T-cell (primary cell): ENCODE measurements at regions of chr2 and their contacts with region 1.

Region 1: GRCh38 chr2:14560366-14561115 is 72.0 kb upstream of the LRATD1 start:
- DNase-seq: no peak
- ATAC-seq: no peak
- H3K4me3 ChIP-seq: no peak overlapping the region
- H3K4me3 Mint-ChIP-seq: no peak overlapping the region
- H3K27ac ChIP-seq: no peak overlapping the region
- H3K27ac Mint-ChIP-seq: no peak overlapping the region
- H3K4me1 ChIP-seq: no peaks in the 10 kb centered on the region
- H3K4me1 Mint-ChIP-seq: no peaks in the 10 kb centered on the region
- H3K27me3 ChIP-seq: no peaks in the 10 kb centered on the region
- H3K27me3 Mint-ChIP-seq: no peaks in the 10 kb centered on the region

Region 2: GRCh38 chr2:14535190-14535589 is 25.4 kb before region 1 on chr2:
- CTCF ChIA-PET with region 1: no interaction called
- POLR2A ChIA-PET with region 1: interaction called in 1 of 2 experiments, 10 read pairs
- DNase-seq: no peak
- ATAC-seq: no peak
- H3K4me3 ChIP-seq: no peak overlapping the region
- H3K4me3 Mint-ChIP-seq: no peak overlapping the region
- H3K27ac ChIP-seq: no peak overlapping the region
- H3K27ac Mint-ChIP-seq: no peak overlapping the region
- H3K4me1 ChIP-seq: no peaks in the 10 kb centered on the region
- H3K4me1 Mint-ChIP-seq: no peaks in the 10 kb centered on the region
- H3K27me3 ChIP-seq: no peaks in the 10 kb centered on the region
- H3K27me3 Mint-ChIP-seq: no peaks in the 10 kb centered on the region

Region 3: DNA sequence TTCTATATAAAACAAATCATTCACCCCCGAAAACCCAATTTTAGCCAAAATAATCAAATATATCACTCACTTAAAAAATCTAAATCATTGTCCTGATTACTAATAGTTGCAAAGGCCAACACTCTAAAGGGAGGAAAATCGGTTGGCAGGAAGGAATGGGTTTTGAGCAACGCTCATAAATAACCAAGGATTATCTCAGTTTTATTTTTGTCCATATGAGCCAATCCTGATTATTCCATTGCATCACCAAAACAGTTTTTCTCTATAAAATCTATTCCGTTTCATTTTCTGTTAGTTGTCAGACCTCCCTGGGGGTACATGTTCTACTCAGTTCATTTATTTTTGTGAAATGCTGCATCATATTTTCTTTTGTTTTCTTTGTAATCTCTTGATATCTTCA is 246.1 kb after region 1 on chr2:
- CTCF ChIA-PET with region 1: no interaction called
- POLR2A ChIA-PET with region 1: no interaction called
- DNase-seq: no peak
- ATAC-seq: no peak
- H3K4me3 ChIP-seq: no peak overlapping the region
- H3K4me3 Mint-ChIP-seq: no peak overlapping the region
- H3K27ac ChIP-seq: no peak overlapping the region
- H3K27ac Mint-ChIP-seq: no peak overlapping the region
- H3K4me1 ChIP-seq: no peaks in the 10 kb centered on the region
- H3K4me1 Mint-ChIP-seq: no peaks in the 10 kb centered on the region
- H3K27me3 ChIP-seq: peaks cover 0 to 2% of the 10 kb centered on the region in 2 experiments
- H3K27me3 Mint-ChIP-seq: peaks cover 0 to 3% of the 10 kb centered on the region in 2 donors

Region 4: GRCh38 chr2:16079610-16080009 is 1519.1 kb after region 1 on chr2:
- CTCF ChIA-PET with region 1: no interaction called
- POLR2A ChIA-PET with region 1: no interaction called
- DNase-seq: no peak
- ATAC-seq: no peak
- H3K4me3 ChIP-seq: no peak overlapping the region
- H3K4me3 Mint-ChIP-seq: no peak overlapping the region
- H3K27ac ChIP-seq: no peak overlapping the region
- H3K27ac Mint-ChIP-seq: no peak overlapping the region
- H3K4me1 ChIP-seq: no peaks in the 10 kb centered on the region
- H3K4me1 Mint-ChIP-seq: no peaks in the 10 kb centered on the region
- H3K27me3 ChIP-seq: peaks cover 0 to 3% of the 10 kb centered on the region in 2 experiments
- H3K27me3 Mint-ChIP-seq: peaks cover 0 to 6% of the 10 kb centered on the region in 2 donors